MCF 10A (cell line): ENCODE measurements at regions of chr6 and their contacts with region 1.

Region 1: DNA sequence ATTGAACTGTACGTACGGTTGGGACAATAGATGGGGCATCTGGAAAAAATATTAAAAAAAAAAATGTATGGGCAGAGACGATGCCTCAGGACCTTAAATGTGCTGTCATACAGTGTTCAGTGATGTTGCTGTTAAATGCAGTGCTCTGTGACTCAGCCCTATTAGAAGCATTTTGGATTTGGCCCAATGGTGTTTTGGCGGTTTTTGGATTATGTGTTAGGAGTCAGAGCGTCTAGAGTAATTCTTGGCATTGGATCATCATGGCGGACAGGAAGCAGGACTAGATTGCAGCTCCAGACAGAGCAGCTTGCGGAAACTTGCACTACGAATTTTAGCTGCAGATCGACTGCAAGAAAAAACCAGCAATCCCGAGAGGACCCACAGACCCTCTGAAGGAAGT is 280.0 kb downstream of the SOX4 start:
- DNase-seq: peak; percentile 97
- H3K4me3 Mint-ChIP-seq: peak overlapping the region; percentile 5
- H3K27ac Mint-ChIP-seq: no peak overlapping the region
- H3K4me1 Mint-ChIP-seq: peaks cover 23% of the 10 kb centered on the region
- H3K27me3 Mint-ChIP-seq: no peaks in the 10 kb centered on the region
- CTCF ChIP-seq: no peak

Region 2: GRCh38 chr6:21885532-21886114 is 12.1 kb after region 1 on chr6:
- CTCF ChIA-PET with region 1: interaction called, 3 read pairs
- POLR2A ChIA-PET with region 1: interaction called, 17 read pairs
- intact Hi-C with region 1: no loop called
- DNase-seq: peak; percentile 71
- H3K4me3 Mint-ChIP-seq: no peak overlapping the region
- H3K27ac Mint-ChIP-seq: no peak overlapping the region
- H3K4me1 Mint-ChIP-seq: peaks cover 8% of the 10 kb centered on the region
- H3K27me3 Mint-ChIP-seq: no peaks in the 10 kb centered on the region
- CTCF ChIP-seq: no peak

Region 3: DNA sequence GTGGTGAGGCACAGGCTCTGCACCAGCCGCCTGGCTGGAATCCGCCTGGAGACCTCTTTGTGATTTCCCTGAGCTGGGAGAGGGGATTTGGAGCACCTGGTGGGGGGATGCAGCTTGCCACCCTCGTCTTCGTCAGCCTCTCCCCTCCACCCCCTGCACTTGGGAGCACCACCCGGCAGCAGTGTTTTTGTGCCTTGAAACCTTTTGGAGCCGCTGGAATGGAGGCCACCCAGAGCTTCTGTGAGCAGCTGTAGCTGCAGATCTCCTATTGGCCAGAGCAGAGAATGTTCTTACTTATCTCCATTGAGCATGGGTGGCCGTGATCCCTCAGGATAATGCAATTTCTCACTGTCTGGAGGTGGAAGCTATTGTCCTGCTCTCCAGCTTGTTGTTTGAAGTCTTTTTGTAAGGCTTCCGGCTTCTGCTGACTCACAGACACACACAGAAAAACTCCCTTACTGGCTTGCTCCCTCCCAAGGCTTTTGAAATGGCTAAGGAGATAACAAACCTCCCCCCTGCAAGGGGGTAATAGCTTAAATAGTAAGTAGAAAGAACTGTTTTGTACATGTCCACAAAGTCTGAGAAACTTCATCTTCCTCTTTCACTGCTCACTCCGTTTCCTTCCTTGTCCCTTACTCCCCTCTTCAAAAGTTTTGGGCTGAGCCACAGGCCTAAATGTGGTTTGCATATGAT is 152.1 kb after region 1 on chr6:
- CTCF ChIA-PET with region 1: no interaction called
- POLR2A ChIA-PET with region 1: no interaction called
- intact Hi-C with region 1: no loop called
- DNase-seq: peak; percentile 38
- H3K4me3 Mint-ChIP-seq: no peak overlapping the region
- H3K27ac Mint-ChIP-seq: no peak overlapping the region
- H3K4me1 Mint-ChIP-seq: no peaks in the 10 kb centered on the region
- H3K27me3 Mint-ChIP-seq: no peaks in the 10 kb centered on the region
- CTCF ChIP-seq: no peak